Activated CD8-positive, alpha-beta T cell treated with anti-CD3 and anti-CD28 coated beads for 36 hours (primary cell): ENCODE measurements at regions of chr15 and their contacts with region 1.

Region 1: GRCh38 chr15:83559310-83559966 is 94.5 kb upstream of the ADAMTSL3 start:
- DNase-seq: peak; percentile 65
- ATAC-seq: peak; percentile 65
- H3K4me3 Mint-ChIP-seq: no peak overlapping the region
- H3K27ac Mint-ChIP-seq: no peak overlapping the region
- H3K4me1 Mint-ChIP-seq: no peaks in the 10 kb centered on the region
- H3K27me3 Mint-ChIP-seq: peaks cover 7% of the 10 kb centered on the region
- CTCF ChIP-seq: peak; percentile 76

Region 2: DNA sequence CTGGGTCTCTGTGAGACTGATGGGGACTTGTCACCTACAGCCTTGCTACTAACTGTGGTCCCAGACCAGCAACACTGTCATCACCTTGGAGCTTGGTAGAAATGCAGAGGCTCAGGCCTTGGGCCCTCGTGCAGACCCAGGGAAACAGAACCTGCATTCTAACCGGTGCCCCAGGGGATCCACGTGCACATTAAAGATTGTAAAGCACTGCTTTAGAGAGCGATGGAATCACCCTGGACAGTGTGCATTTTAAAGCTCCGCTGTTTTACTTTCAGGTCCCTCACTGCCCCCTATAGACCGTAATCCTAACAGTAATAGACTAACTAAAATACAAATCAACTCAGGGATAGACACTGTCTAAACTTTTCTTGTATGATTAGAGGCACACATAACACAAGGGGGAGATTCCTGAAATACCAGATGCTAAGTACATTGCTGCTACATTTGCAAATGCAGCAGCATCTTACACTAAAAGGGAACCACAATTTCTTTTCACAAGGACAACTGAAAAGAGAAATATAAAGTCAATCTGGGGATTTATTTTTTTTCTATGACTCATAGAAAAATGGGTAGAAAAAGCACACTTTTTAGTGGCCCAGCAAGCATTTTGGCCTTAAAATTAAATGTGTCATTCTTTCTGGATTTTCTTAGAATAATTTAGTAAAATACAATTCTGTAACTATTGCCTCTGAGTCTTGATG is 122.8 kb before region 1 on chr15:
- CTCF ChIA-PET with region 1: interaction called, 64 read pairs
- POLR2A ChIA-PET with region 1: no interaction called
- intact Hi-C with region 1: loop called (anchors 2 kb)
- DNase-seq: no peak
- ATAC-seq: peak; percentile 39
- H3K4me3 Mint-ChIP-seq: no peak overlapping the region
- H3K27ac Mint-ChIP-seq: no peak overlapping the region
- H3K4me1 Mint-ChIP-seq: no peaks in the 10 kb centered on the region
- H3K27me3 Mint-ChIP-seq: peaks cover 16% of the 10 kb centered on the region
- CTCF ChIP-seq: peak; percentile 51

Region 3: DNA sequence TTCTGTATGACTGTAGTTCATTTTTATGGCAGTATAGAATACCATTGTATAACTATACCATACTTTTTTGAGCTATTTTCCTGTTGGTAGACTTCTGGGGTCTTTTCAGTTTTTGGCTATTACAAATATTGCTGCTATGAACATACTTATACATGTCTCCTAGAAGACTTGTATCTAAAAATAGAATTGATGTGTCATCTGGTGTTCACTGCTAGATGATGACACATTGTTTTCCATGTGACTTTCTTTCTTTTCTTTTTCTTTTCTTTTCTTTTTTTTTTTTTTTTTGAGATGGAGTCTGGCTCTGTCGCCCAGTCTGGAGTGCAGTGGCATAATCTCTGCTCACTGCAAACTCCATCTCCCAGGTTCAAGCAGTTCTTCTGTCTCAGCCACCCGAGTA is 42.5 kb before region 1 on chr15:
- CTCF ChIA-PET with region 1: no interaction called
- POLR2A ChIA-PET with region 1: no interaction called
- intact Hi-C with region 1: no loop called
- DNase-seq: no peak
- ATAC-seq: no peak
- H3K4me3 Mint-ChIP-seq: no peak overlapping the region
- H3K27ac Mint-ChIP-seq: no peak overlapping the region
- H3K4me1 Mint-ChIP-seq: no peaks in the 10 kb centered on the region
- H3K27me3 Mint-ChIP-seq: peaks cover 3% of the 10 kb centered on the region
- CTCF ChIP-seq: no peak

Region 4: DNA sequence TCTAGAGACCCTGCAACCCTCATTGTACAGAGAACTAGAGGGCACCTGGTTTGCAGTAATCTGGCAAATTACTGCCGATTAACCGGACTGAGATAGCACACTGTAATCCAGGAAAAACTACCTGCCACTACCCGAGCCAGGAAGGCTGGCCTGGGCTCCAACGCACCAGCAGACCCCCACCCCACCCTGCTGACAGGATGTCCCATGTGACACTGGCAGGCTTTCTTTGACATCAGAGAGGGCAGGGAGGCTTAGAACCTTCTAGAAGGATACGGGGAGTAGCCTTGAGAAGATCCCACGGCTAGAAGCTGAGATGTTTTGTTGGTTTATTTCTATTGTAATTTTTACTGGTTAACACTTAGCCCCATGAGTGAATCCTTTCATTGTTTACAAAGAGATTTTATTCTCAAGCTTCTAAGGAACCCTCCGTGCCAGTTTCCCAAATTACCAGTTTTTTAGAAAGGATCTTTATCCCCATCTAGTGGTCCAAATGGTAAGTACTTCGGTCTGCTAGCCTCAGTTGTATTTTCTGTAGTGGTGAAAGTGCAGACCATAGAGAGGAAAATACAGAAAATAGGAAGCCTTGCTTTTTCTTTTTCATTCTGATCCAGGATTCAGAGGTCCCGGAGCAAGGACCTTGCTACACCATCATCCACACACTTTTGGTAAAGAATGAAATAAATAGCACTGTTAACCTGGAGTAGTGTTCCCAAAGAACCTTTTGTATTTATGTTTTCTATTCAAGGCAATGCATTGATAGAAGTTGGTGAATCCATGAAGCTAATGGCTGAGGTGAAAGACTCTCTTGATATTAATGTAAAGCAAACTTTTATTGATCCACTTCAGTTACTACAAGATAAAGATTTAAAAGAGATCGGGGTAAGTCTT is 12.6 kb after region 1 on chr15:
- CTCF ChIA-PET with region 1: interaction called, 15 read pairs
- POLR2A ChIA-PET with region 1: interaction called, 3 read pairs
- intact Hi-C with region 1: no loop called
- DNase-seq: no peak
- ATAC-seq: no peak
- H3K4me3 Mint-ChIP-seq: no peak overlapping the region
- H3K27ac Mint-ChIP-seq: no peak overlapping the region
- H3K4me1 Mint-ChIP-seq: no peaks in the 10 kb centered on the region
- H3K27me3 Mint-ChIP-seq: peaks cover 2% of the 10 kb centered on the region
- CTCF ChIP-seq: peak; percentile 78

Region 5: DNA sequence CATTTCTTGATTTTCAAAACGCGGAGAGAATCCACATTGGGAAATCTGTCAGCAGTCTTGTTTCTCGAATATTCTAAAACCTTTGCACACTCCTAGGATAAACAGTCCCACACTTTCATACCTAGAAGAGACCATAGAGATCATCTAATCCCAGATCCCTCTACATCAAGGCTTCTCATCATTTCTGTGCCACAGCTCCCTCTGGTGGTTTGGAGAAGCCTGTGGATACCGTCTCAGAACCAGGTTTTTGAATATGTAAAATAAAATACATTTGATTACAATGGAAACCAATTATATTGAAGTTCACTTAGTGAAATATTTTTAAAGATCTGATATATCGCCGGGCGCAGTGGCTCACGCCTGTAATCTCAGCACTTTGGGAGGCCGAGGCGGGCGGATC is 464.2 kb after region 1 on chr15:
- CTCF ChIA-PET with region 1: interaction called, 3 read pairs
- POLR2A ChIA-PET with region 1: no interaction called
- intact Hi-C with region 1: loop called (anchors 10 kb)
- DNase-seq: peak; percentile 47
- ATAC-seq: no peak
- H3K4me3 Mint-ChIP-seq: no peak overlapping the region
- H3K27ac Mint-ChIP-seq: no peak overlapping the region
- H3K4me1 Mint-ChIP-seq: no peaks in the 10 kb centered on the region
- H3K27me3 Mint-ChIP-seq: peaks cover 11% of the 10 kb centered on the region
- CTCF ChIP-seq: peak; percentile 68